Gastrocnemius medialis (tissue), 4 donors: ENCODE measurements at regions of chr17 and their contacts with region 1.

Region 1: DNA sequence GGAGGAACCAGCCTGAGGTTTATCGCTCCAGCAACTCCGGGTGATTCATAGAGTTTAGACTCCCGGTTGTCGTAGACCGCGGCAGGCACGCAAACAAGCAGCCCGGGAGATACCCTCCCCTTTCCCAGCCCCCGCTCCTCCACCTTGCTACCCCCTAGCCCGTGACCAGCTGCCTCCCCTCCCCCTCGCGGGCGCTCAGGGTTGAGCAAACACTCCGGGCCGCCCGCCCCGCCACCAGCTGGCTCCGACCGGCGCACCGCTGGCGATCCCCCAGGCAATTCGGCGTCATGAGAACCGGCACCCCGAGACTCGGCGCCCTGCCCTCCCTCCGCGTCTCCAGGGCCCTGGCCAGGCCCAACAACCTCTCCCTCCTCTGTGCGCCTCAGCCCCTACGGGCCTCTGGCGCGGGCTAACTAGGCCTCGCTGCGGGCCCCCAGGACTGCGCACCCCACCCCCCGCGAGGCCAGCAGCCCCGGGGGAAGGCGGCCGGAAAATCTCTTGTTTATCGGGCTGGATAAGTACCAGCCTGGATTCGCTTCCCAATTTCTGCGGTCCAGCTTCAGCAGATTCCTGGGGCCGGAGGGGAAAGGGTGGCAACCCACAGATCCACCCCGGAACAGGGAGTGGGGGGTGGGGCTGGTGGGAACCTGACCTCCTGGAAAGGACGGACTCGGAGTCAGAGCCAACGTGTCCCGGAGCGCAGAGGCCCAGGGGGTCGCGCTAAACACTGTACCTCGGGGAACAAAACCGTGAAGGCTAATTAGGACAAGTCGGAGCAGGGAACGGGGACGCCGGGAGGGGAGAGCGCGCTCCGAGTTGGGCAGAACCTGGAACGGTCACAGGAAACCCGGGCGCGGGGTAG is 951 bp upstream of the GPRC5C start:
- DNase-seq: peak; percentile 94 to 97
- ATAC-seq: peak; percentile 49 to 52
- H3K4me3 ChIP-seq: peak overlapping the region; percentile 76 to 84 (median 81)
- H3K27ac ChIP-seq: peak overlapping the region; percentile 96 to 99 (median 98)
- H3K4me1 ChIP-seq: peaks cover 44 to 56% of the 10 kb centered on the region in 2 donors
- H3K27me3 ChIP-seq: no peaks in the 10 kb centered on the region
- CTCF ChIP-seq: no peak
- POLR2A ChIP-seq: peak; percentile 82 to 88

Region 2: DNA sequence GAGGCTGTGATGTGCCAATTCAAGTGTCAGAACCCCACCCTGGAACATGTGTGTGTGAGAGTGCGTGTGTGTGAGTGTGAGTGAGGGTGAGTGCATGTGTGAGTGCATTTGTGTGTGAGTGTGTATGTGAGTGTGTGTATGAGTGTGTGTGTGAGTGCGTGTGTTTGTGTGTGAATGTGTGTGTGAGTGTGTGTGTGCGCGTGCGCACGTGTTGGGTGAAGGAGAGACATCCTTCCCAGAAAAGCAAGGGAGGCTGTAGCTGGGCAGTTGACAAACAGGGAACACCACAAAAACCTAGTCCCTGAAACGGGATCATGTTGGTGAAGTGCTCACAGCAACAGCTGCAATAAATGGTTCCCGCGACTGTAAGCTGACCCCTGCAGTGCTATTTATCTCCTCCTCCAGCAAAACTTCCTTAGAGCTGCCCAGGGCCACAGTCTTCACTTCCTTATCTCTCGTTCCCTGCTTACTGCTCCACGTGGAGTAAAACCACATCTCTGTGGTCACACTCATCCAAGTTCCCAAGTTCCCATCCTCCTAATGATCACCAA is 267.6 kb before region 1 on chr17:
- in situ Hi-C with region 1: no loop called
- intact Hi-C with region 1: no loop called
- DNase-seq: no peak
- ATAC-seq: no peak
- H3K4me3 ChIP-seq: no peak overlapping the region
- H3K27ac ChIP-seq: no peak overlapping the region
- H3K4me1 ChIP-seq: no peaks in the 10 kb centered on the region
- H3K27me3 ChIP-seq: peaks cover 0 to 5% (median 0%) of the 10 kb centered on the region in 3 donors
- CTCF ChIP-seq: no peak
- POLR2A ChIP-seq: no peak

Region 3: GRCh38 chr17:74442670-74443515 is 12.0 kb after region 1 on chr17:
- in situ Hi-C with region 1: no loop called
- intact Hi-C with region 1: loop called (anchors 1 kb)
- DNase-seq: peak; percentile 79 to 93
- ATAC-seq: peak; percentile 51 to 52
- H3K4me3 ChIP-seq: peak overlapping the region; percentile 39 to 57 (median 50)
- H3K27ac ChIP-seq: peak overlapping the region; percentile 92 to 98 (median 97)
- H3K4me1 ChIP-seq: peaks cover 52 to 59% of the 10 kb centered on the region in 2 donors
- H3K27me3 ChIP-seq: no peaks in the 10 kb centered on the region
- CTCF ChIP-seq: no peak
- POLR2A ChIP-seq: peak; percentile 77 to 81